ENCODE measurements at regions of chr10 and their contacts with region 1.

Region 1: DNA sequence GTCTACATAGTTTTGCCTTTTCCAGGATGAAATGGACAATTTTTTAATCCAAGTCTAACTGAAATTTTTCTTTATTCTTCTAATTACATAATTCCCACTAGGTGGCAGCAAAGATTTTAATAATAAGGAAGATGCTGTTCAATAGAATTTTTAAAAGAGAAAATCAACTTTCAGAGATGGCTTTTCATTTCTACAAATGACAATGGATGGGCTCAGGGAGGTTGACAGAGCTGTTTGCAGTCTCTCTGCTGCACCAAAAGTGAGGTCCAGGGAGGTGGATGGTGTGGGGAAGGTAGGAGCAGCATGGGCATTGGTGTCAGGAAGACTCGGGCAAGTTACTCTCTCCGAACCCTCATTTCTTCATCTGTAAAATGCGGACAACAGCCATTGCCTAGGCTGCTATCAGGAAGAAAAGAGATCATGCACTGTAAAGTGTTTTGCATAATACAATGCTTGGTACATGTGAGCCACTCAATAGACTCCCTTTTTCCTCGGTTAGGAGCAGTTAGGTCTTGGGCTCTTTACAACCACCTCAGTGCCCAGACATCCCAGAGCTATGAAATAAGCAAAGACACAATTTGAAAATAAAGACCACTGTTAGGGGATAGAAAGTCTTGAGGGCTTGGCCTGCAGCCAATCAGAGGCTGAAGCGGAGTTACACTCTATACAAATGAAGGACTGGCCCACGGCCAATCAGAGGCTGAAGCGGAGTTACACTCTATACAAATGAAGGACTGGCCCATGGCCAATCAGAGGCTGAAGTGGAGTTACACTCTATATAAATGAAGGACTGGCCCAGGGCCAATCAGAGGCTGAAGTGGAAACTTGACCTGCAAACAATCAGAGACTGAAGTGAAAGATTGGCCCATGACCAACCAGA is 107.1 kb downstream of the ABLIM1 start:
- DNase-seq: no peak
- CTCF ChIP-seq: no peak

Region 2: GRCh38 chr10:114304017-114304570 is 246.9 kb before region 1 on chr10:
- in situ Hi-C with region 1: loop called (anchors 10 kb)
- DNase-seq: peak; percentile 85
- CTCF ChIP-seq: peak; percentile 75

Region 3: DNA sequence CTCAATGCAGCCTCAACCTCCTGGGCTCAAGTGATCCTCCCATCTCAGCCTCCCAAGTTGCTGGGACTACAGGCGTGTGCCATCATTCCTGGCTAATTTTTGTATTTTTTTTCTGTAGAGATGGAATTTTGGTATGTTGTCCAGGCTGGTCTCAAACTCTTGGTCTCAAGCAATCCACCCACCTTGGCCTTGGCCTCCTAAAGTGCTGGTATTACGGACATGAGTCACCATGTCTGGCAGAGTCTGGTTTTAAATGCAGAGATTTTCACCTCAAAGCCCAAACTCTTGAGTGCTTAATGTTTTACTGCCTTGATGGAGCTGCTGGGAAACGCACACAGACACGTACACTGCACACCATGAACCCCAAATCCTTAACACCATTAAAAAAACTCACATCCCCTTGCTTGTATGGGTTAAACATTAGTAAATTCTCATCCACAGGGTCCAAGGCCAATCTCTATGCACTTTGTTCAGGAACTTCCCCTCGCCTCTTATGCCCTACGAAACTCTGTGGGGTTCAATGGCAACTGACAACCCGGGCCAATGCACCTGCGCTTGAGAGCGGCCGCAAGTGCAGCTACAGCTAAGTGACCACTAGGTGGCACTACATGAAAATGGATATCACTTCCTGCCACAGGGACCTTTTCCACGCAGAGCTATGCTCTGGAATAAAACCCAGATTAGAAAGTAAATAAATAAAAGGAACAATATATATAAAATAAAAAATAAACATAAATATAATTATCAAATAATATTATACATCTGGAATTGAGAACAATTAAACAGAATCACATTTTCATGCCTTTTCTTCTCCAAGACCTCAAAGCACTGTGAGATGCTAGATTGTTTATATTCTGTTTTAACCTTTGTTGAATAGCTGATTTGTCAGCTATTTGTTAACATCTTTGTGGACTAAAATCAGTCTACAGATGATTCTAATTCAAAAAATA is 79.8 kb before region 1 on chr10:
- in situ Hi-C with region 1: loop called (anchors 10 kb)
- DNase-seq: peak; percentile 74
- CTCF ChIP-seq: peak; percentile 85

Region 4: GRCh38 chr10:114694752-114695151 is 143.8 kb after region 1 on chr10:
- in situ Hi-C with region 1: loop called (anchors 10 kb)
- DNase-seq: peak; percentile 58
- CTCF ChIP-seq: peak; percentile 44